ENCODE measurements at regions of chr16 and their contacts with region 1.

Region 1: DNA sequence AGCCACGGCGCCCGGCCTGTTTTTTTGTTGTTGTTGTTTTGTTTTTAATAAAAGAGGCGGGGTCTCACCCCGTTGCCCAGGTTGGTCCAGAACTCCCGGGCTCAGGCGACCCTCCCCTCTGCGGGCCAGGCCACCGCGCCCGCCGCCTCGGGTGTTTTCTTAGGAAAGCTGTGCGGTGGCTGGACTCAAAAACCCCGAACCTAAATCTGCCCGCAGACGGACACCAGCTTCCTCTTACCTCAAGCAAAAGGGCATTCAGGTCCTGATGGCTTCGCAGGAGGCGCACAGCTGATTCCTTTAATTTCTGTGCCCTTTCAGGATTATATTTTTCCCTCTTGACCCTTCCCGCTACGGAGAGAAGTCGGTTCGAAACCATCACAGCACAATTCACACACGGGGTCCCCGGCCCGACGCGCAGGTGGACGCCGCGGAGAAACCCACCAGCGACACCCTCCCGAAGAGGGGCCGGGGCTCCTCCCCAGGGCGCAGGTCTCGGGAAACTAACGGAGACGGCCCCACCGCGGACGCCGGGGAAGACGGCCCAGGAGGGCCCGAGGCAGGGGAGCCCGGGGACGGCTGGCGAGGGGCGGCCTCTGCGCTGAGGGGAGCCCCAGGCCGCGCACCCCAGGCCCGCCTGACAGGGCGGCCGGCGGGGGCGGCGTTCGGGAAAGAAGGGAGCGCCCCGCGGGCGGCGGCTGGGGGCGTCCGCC is 653 bp downstream of the FANCA start:
- DNase-seq: peak in 2 of 3 donors; percentile 5 to 37
- H3K4me3 ChIP-seq: peak overlapping the region; percentile 36 to 82 (median 82)
- H3K4me3 Mint-ChIP-seq: peak overlapping the region; percentile 84 to 92
- H3K27ac ChIP-seq: no peak overlapping the region
- H3K27ac Mint-ChIP-seq: peak overlapping the region in 2 of 7 donors; percentile 15 to 48
- H3K4me1 ChIP-seq: peaks cover 16 to 17% of the 10 kb centered on the region in 2 donors
- H3K4me1 Mint-ChIP-seq: peaks cover 14% of the 10 kb centered on the region
- H3K27me3 ChIP-seq: no peaks in the 10 kb centered on the region
- H3K27me3 Mint-ChIP-seq: peaks cover 0 to 6% (median 2%) of the 10 kb centered on the region in 3 donors
- CTCF ChIP-seq: no peak

Region 2: GRCh38 chr16:89670496-89671431 is 145.0 kb before region 1 on chr16:
- intact Hi-C with region 1: no loop called
- DNase-seq: no peak
- H3K4me3 ChIP-seq: no peak overlapping the region
- H3K4me3 Mint-ChIP-seq: no peak overlapping the region
- H3K27ac ChIP-seq: no peak overlapping the region
- H3K27ac Mint-ChIP-seq: peak overlapping the region in 2 of 7 donors; percentile 7 to 10
- H3K4me1 ChIP-seq: peaks cover 0 to 5% of the 10 kb centered on the region in 2 donors
- H3K4me1 Mint-ChIP-seq: peaks cover 12% of the 10 kb centered on the region
- H3K27me3 ChIP-seq: no peaks in the 10 kb centered on the region
- H3K27me3 Mint-ChIP-seq: peaks cover 2 to 9% (median 7%) of the 10 kb centered on the region in 3 donors
- CTCF ChIP-seq: no peak

Region 3: DNA sequence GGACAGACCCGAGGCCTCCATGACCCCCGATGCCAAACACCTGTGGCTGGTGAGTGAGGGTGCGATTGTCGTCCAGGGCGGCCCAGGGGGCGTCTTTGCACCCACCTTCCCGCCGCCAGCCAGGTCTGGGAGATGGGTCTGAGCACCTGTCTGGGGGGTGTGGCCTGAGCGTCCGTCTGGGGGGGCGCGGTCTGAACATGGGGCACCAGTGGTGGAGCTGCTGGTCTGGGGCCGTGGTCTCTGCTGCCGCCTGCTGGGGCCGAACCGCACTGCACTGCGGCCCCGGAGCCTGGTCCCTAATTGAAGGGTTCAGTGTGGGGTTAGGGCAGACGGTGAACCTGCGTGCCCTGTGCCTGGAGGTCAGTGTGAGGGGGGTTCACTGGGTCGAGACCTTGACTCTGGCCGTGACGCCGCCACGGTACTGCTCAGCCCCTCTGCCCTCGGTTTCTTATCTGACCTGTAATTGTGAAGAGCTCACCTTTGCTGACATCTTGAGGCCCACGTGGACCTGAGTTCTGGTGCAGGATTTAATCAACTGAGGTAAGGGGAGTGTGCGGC is 45.0 kb after region 1 on chr16:
- intact Hi-C with region 1: loop called in 1 of 2 experiments (anchors 5 kb)
- DNase-seq: peak; percentile 50 to 58 (median 58)
- H3K4me3 ChIP-seq: no peak overlapping the region
- H3K4me3 Mint-ChIP-seq: no peak overlapping the region
- H3K27ac ChIP-seq: no peak overlapping the region
- H3K27ac Mint-ChIP-seq: no peak overlapping the region
- H3K4me1 ChIP-seq: peaks cover 31 to 35% of the 10 kb centered on the region in 2 donors
- H3K4me1 Mint-ChIP-seq: peaks cover 33% of the 10 kb centered on the region
- H3K27me3 ChIP-seq: no peaks in the 10 kb centered on the region
- H3K27me3 Mint-ChIP-seq: peaks cover 6 to 12% (median 10%) of the 10 kb centered on the region in 3 donors
- CTCF ChIP-seq: peak; percentile 97

Region 4: DNA sequence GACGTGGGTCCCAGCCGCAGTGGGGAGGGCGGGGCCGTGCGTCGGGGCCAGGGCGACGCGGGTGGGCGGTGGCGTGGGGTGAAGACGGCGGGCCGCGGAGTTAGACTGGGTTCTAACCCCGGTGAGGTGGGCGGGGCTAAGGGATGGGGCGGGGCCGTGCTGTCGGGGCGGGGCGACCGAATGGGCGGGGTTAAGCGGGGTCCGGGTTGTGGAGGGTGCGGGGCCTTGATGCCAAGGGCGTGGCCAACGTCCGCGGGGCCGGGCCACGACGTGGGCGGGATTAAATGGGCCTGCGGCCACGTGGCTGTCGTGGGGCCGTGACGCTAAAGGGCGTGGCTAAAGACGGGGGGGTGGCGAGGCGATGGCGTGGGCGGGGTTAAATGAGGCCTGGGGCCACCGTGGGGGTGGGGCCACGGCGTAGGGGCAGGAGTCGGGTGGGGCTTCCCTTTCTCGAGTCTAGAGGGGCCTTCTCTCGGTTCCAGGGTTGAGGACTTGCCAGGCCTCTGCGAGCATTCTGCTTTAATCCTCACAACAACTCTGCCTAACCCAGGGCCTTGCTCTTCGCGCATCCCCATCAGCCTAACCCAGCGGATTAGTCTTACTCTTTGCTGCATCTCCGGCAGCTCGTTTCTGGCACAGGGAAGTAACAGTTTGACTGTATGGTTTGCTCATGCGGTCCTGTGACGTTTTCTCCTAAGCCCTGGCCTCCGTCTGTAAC is 58.3 kb after region 1 on chr16:
- intact Hi-C with region 1: loop called in 1 of 2 experiments (anchors 2 kb)
- DNase-seq: peak; percentile 92 to 98 (median 97)
- H3K4me3 ChIP-seq: peak overlapping the region; percentile 87 to 97 (median 95)
- H3K4me3 Mint-ChIP-seq: peak overlapping the region; percentile 86 to 93
- H3K27ac ChIP-seq: peak overlapping the region; percentile 99 to 100
- H3K27ac Mint-ChIP-seq: peak overlapping the region; percentile 98 to 99 (median 99)
- H3K4me1 ChIP-seq: peaks cover 18 to 22% of the 10 kb centered on the region in 2 donors
- H3K4me1 Mint-ChIP-seq: peaks cover 15% of the 10 kb centered on the region
- H3K27me3 ChIP-seq: no peaks in the 10 kb centered on the region
- H3K27me3 Mint-ChIP-seq: peaks cover 0 to 3% (median 1%) of the 10 kb centered on the region in 3 donors
- CTCF ChIP-seq: no peak